GM12878 (cell line): ENCODE measurements at regions of chr10 and their contacts with region 1.

Region 1: DNA sequence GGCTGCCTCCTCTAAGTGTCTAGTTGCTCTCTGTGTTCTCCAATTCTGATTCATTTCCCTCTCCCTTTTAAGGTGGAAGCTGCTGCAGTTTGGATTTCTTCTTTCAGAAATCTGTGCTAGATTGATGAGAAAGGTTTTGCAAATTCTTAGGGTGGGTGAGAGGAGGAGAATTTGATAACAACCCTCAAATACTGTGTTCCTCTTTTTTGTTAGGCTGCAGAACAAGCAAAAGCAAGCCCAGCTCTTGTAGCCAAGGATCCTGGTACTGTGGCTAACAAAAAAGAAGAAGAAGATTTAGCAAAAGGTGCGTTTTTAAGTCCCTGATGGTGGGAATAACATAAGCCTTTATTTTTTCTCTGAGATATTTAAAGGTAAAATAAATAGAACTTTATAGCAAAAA is 49.1 kb downstream of the STAM start:
- DNase-seq: no peak
- ATAC-seq: no peak
- H3K4me3 ChIP-seq: no peak overlapping the region
- H3K27ac ChIP-seq: no peak overlapping the region
- H3K4me1 ChIP-seq: no peaks in the 10 kb centered on the region
- H3K27me3 ChIP-seq: no peaks in the 10 kb centered on the region
- CTCF ChIP-seq: no peak
- EP300 ChIP-seq: no peak
- POLR2A ChIP-seq: no peak
- RAD21 ChIP-seq: no peak

Region 2: GRCh38 chr10:17454161-17455014 is 238.6 kb before region 1 on chr10 and contains the start of gene ST8SIA6:
- CTCF ChIA-PET with region 1: no interaction called
- POLR2A ChIA-PET with region 1: no interaction called
- RAD21 ChIA-PET with region 1: no interaction called
- SMC1A ChIA-PET with region 1: no interaction called
- in situ Hi-C with region 1: no loop called
- intact Hi-C with region 1: no loop called
- DNase-seq: no peak
- ATAC-seq: peak; percentile 74
- H3K4me3 ChIP-seq: peak within 1 kb of the TSS; percentile 53; the same call in 1 of the 2 replicates
- H3K27ac ChIP-seq: no peak within 1 kb of the TSS
- H3K4me1 ChIP-seq: no peaks in the 10 kb centered on the region
- H3K27me3 ChIP-seq: peaks cover 5 to 10% of the 10 kb centered on the region in 2 experiments; a peak in 3 of 4 replicates
- CTCF ChIP-seq: peak in 1 of 3 experiments; percentile 16; a peak in 1 of 6 replicates
- EP300 ChIP-seq: no peak
- POLR2A ChIP-seq: no peak
- RAD21 ChIP-seq: no peak
- polyA plus RNA-seq, gene ST8SIA6: not detected

Region 3: GRCh38 chr10:17578603-17579002 is 114.4 kb before region 1 on chr10:
- CTCF ChIA-PET with region 1: no interaction called
- POLR2A ChIA-PET with region 1: no interaction called
- RAD21 ChIA-PET with region 1: no interaction called
- SMC1A ChIA-PET with region 1: no interaction called
- in situ Hi-C with region 1: no loop called
- intact Hi-C with region 1: no loop called
- DNase-seq: no peak
- ATAC-seq: no peak
- H3K4me3 ChIP-seq: no peak overlapping the region
- H3K27ac ChIP-seq: no peak overlapping the region
- H3K4me1 ChIP-seq: no peaks in the 10 kb centered on the region
- H3K27me3 ChIP-seq: no peaks in the 10 kb centered on the region
- CTCF ChIP-seq: no peak
- EP300 ChIP-seq: no peak
- POLR2A ChIP-seq: no peak
- RAD21 ChIP-seq: no peak

Region 4: DNA sequence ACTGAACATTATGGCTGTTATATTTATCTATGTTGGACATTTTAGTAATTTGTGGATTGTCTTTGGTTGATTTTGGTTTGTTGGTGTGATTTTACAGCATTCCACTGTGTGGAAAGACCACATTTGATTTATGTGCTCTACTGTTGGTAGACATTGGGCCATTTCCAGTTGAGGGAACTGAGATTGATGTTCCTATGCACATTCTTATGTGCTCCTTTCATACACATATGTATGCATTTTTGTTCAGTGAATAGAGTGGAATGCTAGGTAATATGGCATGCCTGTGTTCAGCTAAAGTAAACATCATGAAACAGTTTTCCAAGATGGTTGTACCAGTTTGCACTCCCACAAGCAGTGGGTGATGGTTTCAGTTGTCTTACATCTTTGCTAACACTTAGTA is 462.3 kb after region 1 on chr10:
- CTCF ChIA-PET with region 1: no interaction called
- POLR2A ChIA-PET with region 1: interaction called, 15 read pairs
- RAD21 ChIA-PET with region 1: no interaction called
- SMC1A ChIA-PET with region 1: no interaction called
- in situ Hi-C with region 1: no loop called
- intact Hi-C with region 1: no loop called
- DNase-seq: no peak
- ATAC-seq: no peak
- H3K4me3 ChIP-seq: no peak overlapping the region
- H3K27ac ChIP-seq: no peak overlapping the region
- H3K4me1 ChIP-seq: no peaks in the 10 kb centered on the region
- H3K27me3 ChIP-seq: no peaks in the 10 kb centered on the region; a peak in 2 of 4 replicates
- CTCF ChIP-seq: no peak
- EP300 ChIP-seq: no peak
- POLR2A ChIP-seq: no peak
- RAD21 ChIP-seq: no peak